Thyroid gland (tissue), 4 donors: ENCODE measurements at regions of chr7 and their contacts with region 1.

Region 1: DNA sequence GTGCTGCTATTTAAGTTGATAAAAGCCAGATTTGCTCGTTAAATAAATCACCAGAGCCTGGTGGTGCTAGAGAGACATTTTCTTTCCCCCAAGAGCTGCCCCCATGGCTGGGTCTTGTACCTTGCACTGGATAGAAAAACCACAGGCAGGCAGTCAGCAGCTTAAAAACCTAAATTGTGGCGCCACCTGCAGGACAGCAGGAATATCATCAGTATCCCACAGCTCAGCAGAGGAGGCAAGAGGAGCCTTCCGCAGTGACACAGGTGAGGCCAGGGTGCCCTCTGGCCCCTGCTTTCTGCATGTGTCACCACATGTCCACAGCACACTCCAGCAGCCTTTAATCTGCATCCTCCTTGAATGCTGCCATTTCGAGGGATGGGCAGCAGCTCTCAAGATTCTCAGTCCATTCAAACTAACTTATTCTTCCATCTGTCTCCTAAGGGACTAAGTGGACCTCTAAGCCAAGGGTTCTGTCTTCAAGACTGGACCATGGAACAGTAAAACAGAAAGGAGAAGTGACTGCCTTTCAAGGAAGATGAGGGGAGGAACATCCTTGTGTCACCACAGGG is 4.5 kb upstream of the PLXNA4 start:
- DNase-seq: peak; percentile 73 to 84
- H3K4me3 ChIP-seq: no peak overlapping the region
- H3K27ac ChIP-seq: no peak overlapping the region
- H3K4me1 ChIP-seq: peaks cover 0 to 1% of the 10 kb centered on the region in 2 donors
- H3K27me3 ChIP-seq: no peaks in the 10 kb centered on the region
- CTCF ChIP-seq: peak in 5 of 6 experiments; percentile 32 to 82 (median 73)
- POLR2A ChIP-seq: no peak

Region 2: GRCh38 chr7:131945313-131945911 is 635.4 kb before region 1 on chr7:
- intact Hi-C with region 1: loop called (anchors 10 kb)
- DNase-seq: peak; percentile 38 to 48
- H3K4me3 ChIP-seq: no peak overlapping the region
- H3K27ac ChIP-seq: no peak overlapping the region
- H3K4me1 ChIP-seq: peaks cover 4 to 7% of the 10 kb centered on the region in 2 donors
- H3K27me3 ChIP-seq: no peaks in the 10 kb centered on the region
- CTCF ChIP-seq: peak; percentile 54 to 91 (median 61)
- POLR2A ChIP-seq: no peak

Region 3: DNA sequence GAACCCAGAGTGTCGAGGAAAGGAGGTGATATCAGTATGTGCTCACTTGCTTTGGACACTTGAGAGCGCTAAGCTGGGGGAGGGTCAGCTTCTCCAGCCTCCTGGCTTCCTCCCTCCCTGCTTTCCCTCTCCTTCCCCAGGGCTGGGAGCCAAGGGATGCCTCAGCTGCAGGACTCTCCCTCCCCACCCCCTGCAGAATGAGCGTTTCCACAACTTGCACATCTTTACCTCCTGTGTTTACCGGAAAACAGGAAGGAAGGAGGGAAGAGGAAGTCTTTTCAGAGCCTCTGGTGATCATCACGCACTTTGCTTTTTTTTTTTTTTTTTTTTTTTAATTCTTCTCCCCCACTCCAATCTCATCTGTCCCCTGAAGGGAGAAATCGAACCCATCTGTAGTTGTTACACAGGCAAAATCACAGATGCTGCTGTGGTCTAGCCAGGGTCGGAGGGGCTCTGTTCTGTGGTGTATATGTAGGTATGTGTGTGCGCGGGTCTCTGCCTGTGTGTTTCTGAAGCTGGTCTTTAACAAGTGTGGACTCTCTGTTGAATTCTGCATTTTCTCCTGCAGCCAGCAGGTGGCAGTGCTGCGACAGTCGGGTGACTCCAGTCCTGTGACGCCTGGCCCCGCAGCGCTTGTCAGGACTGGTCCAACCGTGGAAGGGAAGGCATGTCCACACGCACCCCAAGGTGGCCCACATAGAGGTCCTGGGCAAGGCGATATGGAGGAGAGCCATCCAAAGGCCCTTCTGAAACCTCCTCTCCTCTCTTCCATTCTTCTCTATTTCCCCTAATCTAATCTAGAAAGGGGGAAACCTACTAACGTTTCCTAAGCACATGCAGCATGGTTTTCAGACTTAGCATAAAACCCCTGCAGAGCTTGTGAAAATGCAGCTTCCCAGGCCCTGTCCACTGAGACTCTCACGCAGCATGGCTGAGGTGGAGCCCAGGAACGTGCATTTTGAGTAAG is 262.2 kb before region 1 on chr7:
- intact Hi-C with region 1: loop called (anchors 2 kb)
- DNase-seq: peak; percentile 80 to 89
- H3K4me3 ChIP-seq: no peak overlapping the region
- H3K27ac ChIP-seq: no peak overlapping the region
- H3K4me1 ChIP-seq: peaks cover 0 to 8% of the 10 kb centered on the region in 2 donors
- H3K27me3 ChIP-seq: no peaks in the 10 kb centered on the region
- CTCF ChIP-seq: peak; percentile 85 to 93 (median 87)
- POLR2A ChIP-seq: no peak